HEK293 (cell line): ENCODE measurements at regions of chr19 and their contacts with region 1.

Region 1: DNA sequence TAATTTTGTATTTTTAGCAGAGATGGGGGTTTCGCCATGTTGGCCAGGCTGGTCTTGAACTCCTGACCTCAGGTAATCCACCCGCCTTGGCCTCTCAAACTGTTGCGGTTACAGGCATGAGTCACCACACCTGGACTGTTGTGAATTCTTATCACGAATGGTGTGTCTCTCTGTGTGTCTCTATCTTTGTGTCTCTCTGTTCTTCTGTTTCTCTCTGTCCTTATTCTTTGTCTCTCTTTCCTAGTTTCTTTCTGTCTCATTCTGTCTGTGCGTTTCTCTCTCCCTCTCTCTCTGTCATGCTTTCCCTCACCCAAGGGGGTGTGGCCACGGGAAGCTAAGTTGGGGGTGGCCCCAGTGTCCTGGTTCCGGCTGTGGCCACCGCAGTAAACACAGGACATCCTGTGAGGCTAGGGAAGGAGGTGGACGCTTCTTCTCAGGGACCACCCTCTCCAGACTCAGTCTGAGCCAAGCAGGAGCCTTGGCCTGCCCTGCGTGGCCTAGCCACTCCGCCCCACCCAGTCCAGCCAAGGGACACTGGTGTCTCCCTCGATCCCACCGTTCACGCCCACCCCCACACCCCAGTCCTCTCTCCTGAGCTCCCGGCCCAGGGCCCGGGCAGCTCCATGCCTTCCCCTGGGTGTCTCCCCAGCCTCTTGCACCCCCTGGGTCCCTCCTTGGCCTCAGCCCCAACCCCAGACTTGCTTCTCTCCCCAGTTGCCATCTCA is 3.9 kb upstream of the PRX start:
- H3K4me3 ChIP-seq: no peak overlapping the region
- H3K27ac ChIP-seq: peak overlapping the region; percentile 30; the same call in 1 of the 2 replicates
- H3K4me1 ChIP-seq: peaks cover 14% of the 10 kb centered on the region
- CTCF ChIP-seq: no peak

Region 2: GRCh38 chr19:40403262-40403984 is 13.7 kb before region 1 on chr19:
- CTCF ChIA-PET with region 1: interaction called, 40 read pairs
- POLR2A ChIA-PET with region 1: interaction called, 30 read pairs
- H3K4me3 ChIP-seq: peak overlapping the region; percentile 50
- H3K27ac ChIP-seq: peak overlapping the region; percentile 80
- H3K4me1 ChIP-seq: peaks cover 9% of the 10 kb centered on the region
- CTCF ChIP-seq: peak; percentile 68; the same call in 1 of the 2 replicates